T-cell (primary cell): ENCODE measurements at regions of chr16 and their contacts with region 1.

Region 1: DNA sequence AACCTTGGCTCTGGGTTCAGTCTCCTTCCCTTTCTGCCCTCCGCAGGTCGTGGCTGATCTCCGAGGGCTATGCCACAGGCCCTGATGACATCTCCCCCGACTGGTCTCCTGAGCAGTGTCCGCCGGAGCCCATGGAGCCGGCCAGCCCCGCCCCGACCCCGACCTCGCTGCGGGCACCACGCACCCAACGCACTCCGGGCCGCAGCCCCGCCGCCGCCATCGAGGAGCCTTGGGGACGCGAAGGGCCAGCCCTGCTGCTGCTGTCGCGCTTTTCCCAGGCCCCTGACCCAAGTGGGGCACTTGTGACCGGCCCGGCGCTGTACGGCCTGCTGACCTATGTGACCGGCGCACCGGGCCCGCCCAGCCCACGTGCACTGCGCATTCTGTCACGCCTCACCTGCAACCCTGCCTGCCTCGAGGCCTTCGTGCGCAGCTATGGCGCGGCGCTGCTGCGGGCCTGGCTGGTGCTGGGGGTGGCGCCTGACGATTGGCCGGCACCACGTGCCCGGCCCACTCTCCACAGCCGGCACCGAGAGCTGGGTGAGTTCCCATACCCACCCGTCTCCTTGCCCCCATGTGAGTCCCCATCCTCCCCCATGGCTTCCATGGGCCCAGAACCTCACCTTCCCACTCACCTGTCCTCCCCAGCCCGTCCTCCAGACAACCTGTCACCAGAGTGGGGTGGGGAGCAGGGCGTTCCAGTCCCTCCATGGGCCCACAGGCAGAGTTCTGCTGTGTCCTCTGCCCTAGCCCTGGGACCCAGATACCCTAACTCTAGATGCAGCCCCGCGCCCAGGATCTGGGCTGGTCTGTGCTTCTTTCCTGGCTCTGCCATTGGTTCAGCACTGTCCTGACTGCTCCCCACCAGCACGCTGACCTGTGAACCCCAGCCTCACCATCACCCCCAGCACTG is 5.3 kb downstream of the ARMC5 start:
- DNase-seq: no peak
- ATAC-seq: no peak
- H3K4me3 ChIP-seq: no peak overlapping the region
- H3K4me3 Mint-ChIP-seq: no peak overlapping the region
- H3K27ac ChIP-seq: no peak overlapping the region
- H3K27ac Mint-ChIP-seq: no peak overlapping the region
- H3K4me1 ChIP-seq: peaks cover 8 to 23% of the 10 kb centered on the region in 2 experiments
- H3K4me1 Mint-ChIP-seq: peaks cover 25 to 27% (median 27%) of the 10 kb centered on the region in 3 donors
- H3K27me3 ChIP-seq: no peaks in the 10 kb centered on the region
- H3K27me3 Mint-ChIP-seq: no peaks in the 10 kb centered on the region

Region 2: GRCh38 chr16:29862884-29863668 is 1601.5 kb before region 1 on chr16 and contains the start of gene CDIPT:
- CTCF ChIA-PET with region 1: no interaction called
- POLR2A ChIA-PET with region 1: no interaction called
- DNase-seq: peak; percentile 85 to 97 (median 92)
- ATAC-seq: peak; percentile 97 to 98 (median 98)
- H3K4me3 ChIP-seq: peak within 1 kb of the TSS; percentile 82 to 83
- H3K4me3 Mint-ChIP-seq: peak within 1 kb of the TSS; percentile 91 to 94 (median 94)
- H3K27ac ChIP-seq: peak within 1 kb of the TSS; percentile 99
- H3K27ac Mint-ChIP-seq: peak within 1 kb of the TSS; percentile 99 to 100
- H3K4me1 ChIP-seq: peaks cover 5 to 31% of the 10 kb centered on the region in 2 experiments
- H3K4me1 Mint-ChIP-seq: peaks cover 20 to 33% (median 23%) of the 10 kb centered on the region in 3 donors
- H3K27me3 ChIP-seq: peaks cover 0 to 4% of the 10 kb centered on the region in 2 experiments
- H3K27me3 Mint-ChIP-seq: no peaks in the 10 kb centered on the region
- total RNA-seq, gene CDIPT: 37.1 to 87.0 (median 79.7) TPM

Region 3: GRCh38 chr16:31229501-31229900 is 235.1 kb before region 1 on chr16:
- CTCF ChIA-PET with region 1: no interaction called
- POLR2A ChIA-PET with region 1: interaction called in 1 of 2 experiments, 17 read pairs
- DNase-seq: no peak
- ATAC-seq: no peak
- H3K4me3 ChIP-seq: no peak overlapping the region
- H3K4me3 Mint-ChIP-seq: no peak overlapping the region
- H3K27ac ChIP-seq: no peak overlapping the region
- H3K27ac Mint-ChIP-seq: no peak overlapping the region
- H3K4me1 ChIP-seq: no peaks in the 10 kb centered on the region
- H3K4me1 Mint-ChIP-seq: no peaks in the 10 kb centered on the region
- H3K27me3 ChIP-seq: peaks cover 0 to 4% of the 10 kb centered on the region in 2 experiments
- H3K27me3 Mint-ChIP-seq: peaks cover 0 to 3% of the 10 kb centered on the region in 2 donors

Region 4: GRCh38 chr16:31517800-31518402 is 53.3 kb after region 1 on chr16:
- CTCF ChIA-PET with region 1: no interaction called
- POLR2A ChIA-PET with region 1: no interaction called
- DNase-seq: no peak
- ATAC-seq: no peak
- H3K4me3 ChIP-seq: no peak overlapping the region
- H3K4me3 Mint-ChIP-seq: no peak overlapping the region
- H3K27ac ChIP-seq: no peak overlapping the region
- H3K27ac Mint-ChIP-seq: no peak overlapping the region
- H3K4me1 ChIP-seq: no peaks in the 10 kb centered on the region
- H3K4me1 Mint-ChIP-seq: no peaks in the 10 kb centered on the region
- H3K27me3 ChIP-seq: peaks cover 0 to 10% of the 10 kb centered on the region in 2 experiments
- H3K27me3 Mint-ChIP-seq: peaks cover 0 to 10% of the 10 kb centered on the region in 2 donors